ENCODE measurements at regions of chr2 and their contacts with region 1.

Region 1: DNA sequence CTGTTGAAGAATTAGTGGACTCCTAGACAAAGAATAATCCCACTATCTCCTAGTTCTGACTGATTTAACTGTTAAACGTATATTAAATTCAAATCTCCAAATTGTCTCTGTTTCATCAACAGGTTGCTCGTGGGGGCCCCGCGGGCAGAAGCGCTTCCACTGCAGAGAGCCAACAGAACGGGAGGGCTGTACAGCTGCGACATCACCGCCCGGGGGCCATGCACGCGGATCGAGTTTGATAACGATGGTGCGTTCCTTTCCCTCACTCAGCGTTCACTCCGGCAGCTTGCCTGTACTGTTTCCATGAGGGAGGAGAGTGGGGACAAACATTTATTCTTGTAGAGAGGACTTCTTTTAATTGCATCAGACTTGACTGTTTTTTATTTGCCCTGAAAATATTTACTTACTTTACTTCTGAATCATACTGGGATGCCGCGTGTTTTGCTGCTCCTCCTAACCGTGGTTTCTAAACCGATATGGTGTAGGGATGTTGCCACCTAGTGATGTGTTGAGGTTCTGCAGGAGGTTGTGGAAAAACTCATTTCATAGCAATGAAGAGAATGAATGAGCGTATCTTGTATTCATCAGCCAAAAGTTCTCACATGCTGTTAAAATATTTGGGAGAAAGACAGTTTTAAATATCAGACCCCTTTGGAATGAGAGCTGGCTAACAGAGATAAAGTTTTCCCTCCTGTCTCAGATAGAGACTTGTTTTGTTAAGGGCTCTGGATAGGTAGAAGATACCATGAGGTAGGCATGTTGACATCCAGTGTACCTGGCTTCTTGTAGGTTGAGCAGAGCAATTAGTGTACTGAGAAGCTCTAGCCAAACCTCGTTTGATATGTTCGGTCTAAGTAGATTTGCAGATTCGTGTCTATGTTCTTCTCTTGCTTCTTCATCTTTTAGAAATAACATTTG is 38.3 kb downstream of the ITGA6 start:
- DNase-seq: peak; percentile 88
- ATAC-seq: peak; percentile 69
- H3K4me3 Mint-ChIP-seq: peak overlapping the region; percentile 39
- H3K27ac Mint-ChIP-seq: peak overlapping the region; percentile 76
- H3K4me1 Mint-ChIP-seq: peaks cover 60% of the 10 kb centered on the region
- H3K27me3 Mint-ChIP-seq: no peaks in the 10 kb centered on the region
- CTCF ChIP-seq: peak; percentile 95

Region 2: DNA sequence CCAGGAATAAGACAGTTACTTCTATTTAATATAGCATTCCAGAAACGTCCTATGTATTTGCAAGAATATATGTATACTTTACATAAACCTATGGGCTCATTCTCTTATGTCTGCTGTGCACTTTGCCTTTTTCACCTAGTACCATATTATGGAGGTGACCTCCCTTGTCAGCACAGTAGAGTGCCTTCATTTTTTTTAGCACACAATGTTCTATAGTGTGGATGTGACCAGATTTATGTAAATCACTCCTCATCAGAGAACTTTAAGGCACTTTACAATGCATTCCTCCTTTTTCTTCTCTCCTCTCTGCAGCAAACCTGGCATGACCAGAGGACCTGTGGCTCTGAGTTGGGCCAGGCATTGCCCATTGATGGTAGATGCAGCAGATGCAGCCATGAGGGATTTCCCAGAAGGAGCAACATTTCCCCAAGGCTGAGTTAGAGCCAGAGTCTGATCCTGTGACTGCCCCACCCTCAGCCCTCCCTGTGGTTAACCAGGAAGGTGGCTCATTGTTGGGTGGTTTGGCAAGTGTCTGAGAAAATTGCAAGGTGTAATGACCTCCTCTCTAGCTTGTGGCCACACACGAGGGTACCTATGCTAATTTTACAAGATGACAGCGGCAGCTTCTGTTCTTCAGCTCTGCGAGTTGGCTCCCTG is 286.5 kb before region 1 on chr2:
- CTCF ChIA-PET with region 1: interaction called, 106 read pairs
- POLR2A ChIA-PET with region 1: interaction called, 3 read pairs
- intact Hi-C with region 1: no loop called
- DNase-seq: peak; percentile 48
- ATAC-seq: peak; percentile 45
- H3K4me3 Mint-ChIP-seq: no peak overlapping the region
- H3K27ac Mint-ChIP-seq: no peak overlapping the region
- H3K4me1 Mint-ChIP-seq: peaks cover 25% of the 10 kb centered on the region
- H3K27me3 Mint-ChIP-seq: no peaks in the 10 kb centered on the region
- CTCF ChIP-seq: no peak

Region 3: DNA sequence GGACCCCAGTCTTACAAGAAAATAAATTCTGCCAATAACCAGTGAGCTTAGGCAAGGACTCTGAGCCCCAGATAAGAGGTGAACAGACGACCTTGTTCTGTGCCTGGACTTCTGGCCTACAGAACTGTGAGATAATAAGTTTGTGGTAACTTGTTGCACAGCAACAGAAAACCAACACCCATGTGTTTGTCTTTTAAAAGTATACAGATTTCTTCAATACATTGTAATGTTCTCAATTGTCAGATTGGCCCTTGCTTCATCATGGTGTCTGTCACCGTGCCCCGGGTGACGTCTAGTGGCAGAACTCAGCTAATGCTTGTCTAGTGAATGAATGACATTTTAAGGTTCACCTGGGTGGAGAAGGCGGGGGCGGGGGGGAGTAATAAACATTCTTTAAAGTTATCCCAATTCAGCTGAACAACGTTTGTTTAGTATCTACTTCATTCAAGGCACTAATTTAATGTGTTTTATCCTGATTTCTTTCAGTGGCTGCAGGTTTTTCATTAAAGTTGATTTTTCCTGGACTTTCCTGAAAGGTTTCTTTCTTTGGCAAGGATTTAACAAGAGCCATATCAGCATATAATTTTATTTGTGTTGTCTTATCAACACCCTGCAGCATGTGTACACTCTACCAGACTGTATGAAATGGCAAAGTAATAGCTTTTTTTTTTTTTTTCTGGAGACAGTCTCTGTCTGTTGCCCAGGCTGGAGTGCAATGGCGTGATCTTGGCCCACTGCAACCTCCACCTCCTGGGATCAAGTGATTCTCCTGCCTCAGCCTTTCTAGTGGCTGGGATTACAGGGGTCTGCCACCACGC is 239.2 kb before region 1 on chr2:
- CTCF ChIA-PET with region 1: interaction called, 15 read pairs
- POLR2A ChIA-PET with region 1: no interaction called
- intact Hi-C with region 1: no loop called
- DNase-seq: peak; percentile 47
- ATAC-seq: peak; percentile 64
- H3K4me3 Mint-ChIP-seq: no peak overlapping the region
- H3K27ac Mint-ChIP-seq: no peak overlapping the region
- H3K4me1 Mint-ChIP-seq: peaks cover 19% of the 10 kb centered on the region
- H3K27me3 Mint-ChIP-seq: no peaks in the 10 kb centered on the region
- CTCF ChIP-seq: peak; percentile 16

Region 4: GRCh38 chr2:172285010-172285621 is 180.6 kb before region 1 on chr2:
- CTCF ChIA-PET with region 1: interaction called, 15 read pairs
- POLR2A ChIA-PET with region 1: interaction called, 3 read pairs
- intact Hi-C with region 1: no loop called
- DNase-seq: no peak
- ATAC-seq: no peak
- H3K4me3 Mint-ChIP-seq: no peak overlapping the region
- H3K27ac Mint-ChIP-seq: no peak overlapping the region
- H3K4me1 Mint-ChIP-seq: peaks cover 25% of the 10 kb centered on the region
- H3K27me3 Mint-ChIP-seq: no peaks in the 10 kb centered on the region
- CTCF ChIP-seq: no peak

Region 5: DNA sequence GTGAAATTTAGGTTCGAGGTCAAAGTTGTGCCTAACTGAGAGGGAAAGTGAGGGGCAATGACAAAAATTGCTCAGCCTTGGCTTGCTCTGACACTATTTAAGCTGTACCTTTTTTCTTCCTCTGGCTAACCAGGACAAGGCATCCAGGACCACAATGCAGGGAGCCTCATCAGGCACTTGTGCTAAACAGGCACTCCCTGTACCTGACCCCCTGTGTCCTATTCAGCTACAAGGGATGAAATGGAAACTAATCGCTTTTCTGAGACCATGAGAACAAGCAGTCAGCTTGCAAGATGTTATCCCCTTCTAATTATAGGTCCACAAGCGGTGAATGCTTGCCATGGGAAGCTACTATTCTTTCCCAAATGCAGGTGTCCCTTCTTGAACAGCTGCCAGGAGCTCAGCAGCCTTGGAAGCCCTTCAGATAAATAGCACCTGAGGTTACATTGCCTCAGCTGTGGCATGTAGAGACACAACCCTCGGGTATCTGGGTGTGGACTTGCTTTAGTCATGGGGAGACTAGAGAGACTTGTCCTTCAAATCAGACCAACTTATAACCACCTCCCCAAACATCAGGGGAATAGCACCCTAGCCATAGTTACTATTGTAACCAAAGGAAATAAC is 57.4 kb before region 1 on chr2:
- CTCF ChIA-PET with region 1: interaction called, 15 read pairs
- POLR2A ChIA-PET with region 1: interaction called, 3 read pairs
- intact Hi-C with region 1: no loop called
- DNase-seq: no peak
- ATAC-seq: no peak
- H3K4me3 Mint-ChIP-seq: no peak overlapping the region
- H3K27ac Mint-ChIP-seq: no peak overlapping the region
- H3K4me1 Mint-ChIP-seq: peaks cover 3% of the 10 kb centered on the region
- H3K27me3 Mint-ChIP-seq: no peaks in the 10 kb centered on the region
- CTCF ChIP-seq: no peak

Region 6: DNA sequence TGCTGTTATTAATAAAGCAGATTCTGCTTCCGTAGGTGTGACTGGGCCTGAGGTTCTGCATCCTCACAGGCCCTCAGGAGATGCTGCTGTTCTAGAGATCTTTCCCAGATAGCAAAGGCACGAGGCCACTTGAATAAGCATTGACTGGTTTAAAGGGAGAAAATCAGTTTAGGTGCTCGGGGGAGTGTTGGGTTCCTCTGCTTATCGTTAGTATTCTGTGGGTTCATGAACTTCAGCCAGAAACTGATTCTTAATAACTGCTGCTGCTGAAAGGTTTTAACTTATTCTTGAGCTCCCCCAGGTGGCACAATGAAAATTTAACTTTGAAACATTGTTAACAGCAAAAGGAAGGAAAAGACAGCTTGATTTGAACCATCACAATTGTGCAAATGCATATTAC is 18.6 kb after region 1 on chr2:
- CTCF ChIA-PET with region 1: interaction called, 46 read pairs
- POLR2A ChIA-PET with region 1: no interaction called
- intact Hi-C with region 1: no loop called
- DNase-seq: no peak
- ATAC-seq: peak; percentile 31
- H3K4me3 Mint-ChIP-seq: no peak overlapping the region
- H3K27ac Mint-ChIP-seq: no peak overlapping the region
- H3K4me1 Mint-ChIP-seq: peaks cover 52% of the 10 kb centered on the region
- H3K27me3 Mint-ChIP-seq: no peaks in the 10 kb centered on the region
- CTCF ChIP-seq: peak; percentile 42

Region 7: DNA sequence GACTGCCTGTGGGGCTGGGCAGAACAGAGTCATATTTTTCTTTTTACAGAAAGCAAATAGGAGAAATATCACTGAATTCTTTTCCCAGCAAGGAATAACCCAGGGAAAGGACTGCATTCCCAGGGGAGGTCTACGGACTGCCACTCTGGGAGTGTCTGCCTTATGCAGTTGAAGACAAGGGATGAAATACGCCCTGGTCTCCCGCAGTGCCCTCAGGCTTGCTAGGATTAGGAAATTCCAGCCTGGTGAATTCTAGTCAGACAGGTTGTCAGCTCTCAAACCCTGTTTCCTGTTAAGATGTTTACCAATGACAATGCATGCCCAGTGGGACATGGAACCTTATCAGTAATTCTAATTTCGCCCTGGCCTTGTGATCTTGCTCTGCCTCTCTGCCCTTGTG is 59.9 kb after region 1 on chr2:
- CTCF ChIA-PET with region 1: no interaction called
- POLR2A ChIA-PET with region 1: no interaction called
- intact Hi-C with region 1: no loop called
- DNase-seq: no peak
- ATAC-seq: no peak
- H3K4me3 Mint-ChIP-seq: no peak overlapping the region
- H3K27ac Mint-ChIP-seq: no peak overlapping the region
- H3K4me1 Mint-ChIP-seq: no peaks in the 10 kb centered on the region
- H3K27me3 Mint-ChIP-seq: no peaks in the 10 kb centered on the region
- CTCF ChIP-seq: no peak

Measured in activated CD8-positive, alpha-beta T cell treated with anti-CD3 and anti-CD28 coated beads for 36 hours (primary cell).